CD4-positive, alpha-beta T cell (primary cell): ENCODE measurements at regions of chr12 and their contacts with region 1.

Region 1: DNA sequence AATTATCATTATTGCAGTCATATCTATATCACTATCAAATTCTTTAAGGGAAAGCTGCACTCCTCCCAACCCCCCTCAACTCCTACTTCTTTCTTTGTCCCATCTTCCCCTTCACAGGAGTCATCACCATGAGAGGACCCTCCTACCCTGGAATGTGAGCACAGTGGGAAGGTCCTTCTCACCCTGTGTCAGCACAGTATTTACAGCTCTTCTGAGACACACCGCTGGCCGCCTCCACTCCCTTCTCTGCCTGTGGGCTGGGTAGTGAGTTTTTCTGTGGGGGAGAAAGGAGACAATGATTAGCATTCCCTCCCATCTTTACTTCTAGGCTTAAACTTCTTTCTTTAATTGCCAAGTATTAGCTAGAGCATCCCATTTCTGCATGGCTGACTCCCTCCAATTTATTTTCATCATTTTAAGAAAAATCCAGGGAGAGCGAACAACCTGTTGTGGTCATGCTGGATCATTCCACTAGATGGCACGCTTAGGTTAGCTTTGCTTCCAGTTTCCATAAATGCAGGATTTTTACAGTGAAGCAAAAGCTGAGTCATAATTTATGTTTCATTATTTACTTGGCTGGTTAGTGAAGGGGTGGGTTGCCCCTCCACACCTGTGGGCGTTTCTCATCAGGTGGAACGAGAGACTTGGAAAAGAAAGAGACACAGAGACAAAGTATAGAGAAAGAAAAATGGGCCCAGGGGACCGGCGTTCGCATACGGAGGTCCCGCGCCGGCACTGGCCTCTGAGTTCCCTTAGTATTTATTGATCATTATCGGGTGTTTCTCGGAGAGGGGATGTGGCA is 188.5 kb downstream of the ALX1 start:
- DNase-seq: peak in 3 of 14 experiments; percentile 17 to 32 (median 18)
- ATAC-seq: peak; percentile 49
- H3K4me3 ChIP-seq: peak overlapping the region; percentile 20
- H3K4me3 Mint-ChIP-seq: peak overlapping the region; percentile 85
- H3K27ac ChIP-seq: no peak overlapping the region
- H3K27ac Mint-ChIP-seq: no peak overlapping the region
- H3K4me1 ChIP-seq: no peaks in the 10 kb centered on the region
- H3K4me1 Mint-ChIP-seq: peaks cover 15% of the 10 kb centered on the region
- H3K27me3 ChIP-seq: no peaks in the 10 kb centered on the region
- H3K27me3 Mint-ChIP-seq: no peaks in the 10 kb centered on the region
- CTCF ChIP-seq: peak; percentile 32

Region 2: GRCh38 chr12:85866986-85867776 is 398.6 kb after region 1 on chr12:
- CTCF ChIA-PET with region 1: no interaction called
- POLR2A ChIA-PET with region 1: no interaction called
- intact Hi-C with region 1: loop called (anchors 1 to 5 kb)
- DNase-seq: peak in 2 of 14 experiments; percentile 5 to 6
- ATAC-seq: no peak
- H3K4me3 ChIP-seq: no peak overlapping the region
- H3K4me3 Mint-ChIP-seq: no peak overlapping the region
- H3K27ac ChIP-seq: no peak overlapping the region
- H3K27ac Mint-ChIP-seq: no peak overlapping the region
- H3K4me1 ChIP-seq: no peaks in the 10 kb centered on the region
- H3K4me1 Mint-ChIP-seq: no peaks in the 10 kb centered on the region
- H3K27me3 ChIP-seq: no peaks in the 10 kb centered on the region
- H3K27me3 Mint-ChIP-seq: no peaks in the 10 kb centered on the region
- CTCF ChIP-seq: peak; percentile 22

Region 3: DNA sequence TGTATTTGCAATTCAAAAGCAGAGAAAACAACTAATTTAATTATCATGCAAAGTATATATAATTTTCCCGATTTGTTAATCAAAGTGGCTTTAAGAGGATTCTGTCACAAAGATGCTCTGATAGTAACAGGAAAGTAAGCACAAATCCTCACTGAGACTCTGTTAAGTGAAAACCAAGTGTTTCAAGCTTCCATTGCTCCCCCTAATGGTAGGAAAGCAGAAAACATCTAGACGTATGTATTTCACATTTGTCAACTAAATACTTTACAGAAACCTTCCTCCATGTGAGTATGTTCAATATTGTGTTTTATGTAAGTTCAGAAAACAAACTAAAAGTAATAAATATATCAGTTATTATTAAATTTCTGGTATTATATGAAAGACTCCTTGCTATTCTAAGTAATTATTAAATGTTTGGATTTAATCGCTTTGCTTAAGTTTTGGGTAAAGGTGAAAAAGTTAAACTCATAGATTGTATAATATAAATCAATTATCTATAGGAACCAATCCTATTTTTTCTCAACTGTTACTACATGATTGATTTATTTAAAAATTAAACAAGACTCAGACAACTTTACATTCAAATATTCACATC is 404.0 kb after region 1 on chr12:
- CTCF ChIA-PET with region 1: no interaction called
- POLR2A ChIA-PET with region 1: no interaction called
- intact Hi-C with region 1: loop called (anchors 1 to 5 kb)
- DNase-seq: peak in 3 of 14 experiments; percentile 8 to 23 (median 20)
- ATAC-seq: no peak
- H3K4me3 ChIP-seq: no peak overlapping the region
- H3K4me3 Mint-ChIP-seq: no peak overlapping the region
- H3K27ac ChIP-seq: no peak overlapping the region
- H3K27ac Mint-ChIP-seq: no peak overlapping the region
- H3K4me1 ChIP-seq: no peaks in the 10 kb centered on the region
- H3K4me1 Mint-ChIP-seq: no peaks in the 10 kb centered on the region
- H3K27me3 ChIP-seq: no peaks in the 10 kb centered on the region
- H3K27me3 Mint-ChIP-seq: no peaks in the 10 kb centered on the region
- CTCF ChIP-seq: peak; percentile 68

Region 4: DNA sequence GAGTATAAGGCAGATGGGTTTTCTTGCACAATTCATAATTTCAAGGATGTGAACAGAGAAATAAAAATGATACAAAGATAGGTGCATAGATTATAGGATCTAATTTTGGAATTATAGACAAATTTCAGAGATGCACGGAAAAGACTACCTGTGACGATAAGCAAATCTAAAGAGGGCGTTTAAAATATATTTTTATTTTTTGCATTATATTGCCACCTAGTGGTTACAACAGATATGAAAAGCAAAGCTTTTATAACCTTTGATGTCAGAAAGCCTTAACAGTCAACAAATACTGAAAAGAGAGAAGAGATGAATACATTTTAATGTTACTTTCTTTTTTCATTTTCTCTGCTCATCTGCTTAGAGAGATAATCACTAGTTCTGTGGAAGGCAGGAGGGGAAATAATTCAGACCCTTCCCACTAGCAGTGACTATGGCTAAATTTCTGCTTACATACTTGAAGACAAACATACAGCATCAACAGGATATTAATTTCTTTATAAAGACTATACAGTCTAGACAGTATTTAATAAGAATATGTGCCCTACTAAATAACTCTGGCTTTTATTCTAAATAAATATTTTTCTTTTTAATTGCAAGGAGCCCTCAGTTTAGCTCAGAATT is 451.9 kb after region 1 on chr12:
- CTCF ChIA-PET with region 1: no interaction called
- POLR2A ChIA-PET with region 1: no interaction called
- intact Hi-C with region 1: loop called in 1 of 2 experiments (anchors 2 kb)
- DNase-seq: peak in 1 of 14 experiments; percentile 1
- ATAC-seq: no peak
- H3K4me3 ChIP-seq: no peak overlapping the region
- H3K4me3 Mint-ChIP-seq: no peak overlapping the region
- H3K27ac ChIP-seq: no peak overlapping the region
- H3K27ac Mint-ChIP-seq: no peak overlapping the region
- H3K4me1 ChIP-seq: no peaks in the 10 kb centered on the region
- H3K4me1 Mint-ChIP-seq: no peaks in the 10 kb centered on the region
- H3K27me3 ChIP-seq: no peaks in the 10 kb centered on the region
- H3K27me3 Mint-ChIP-seq: no peaks in the 10 kb centered on the region
- CTCF ChIP-seq: peak; percentile 74